ENCODE measurements at regions of chr10 and their contacts with region 1.

Region 1: GRCh38 chr10:73252445-73253224 is at the start of gene MRPS16:
- DNase-seq: peak; percentile 97
- H3K4me3 ChIP-seq: peak within 1 kb of the TSS; percentile 67 to 94 (median 82)
- H3K27ac ChIP-seq: peak within 1 kb of the TSS; percentile 85 to 94 (median 90)
- H3K4me1 ChIP-seq: peaks cover 24 to 45% (median 37%) of the 10 kb centered on the region in 4 donors
- H3K27me3 ChIP-seq: no peaks in the 10 kb centered on the region
- CTCF ChIP-seq: peak in 1 of 3 experiments; percentile 25
- EP300 ChIP-seq: no peak
- POLR2A ChIP-seq: peak; percentile 26
- total RNA-seq, gene MRPS16: 34.5 to 46.1 (median 38.0) TPM

Region 2: GRCh38 chr10:73413528-73414229 is 161.0 kb after region 1 on chr10 and contains the start of gene ANXA7:
- intact Hi-C with region 1: loop called (anchors 5 kb)
- DNase-seq: peak; percentile 96
- H3K4me3 ChIP-seq: peak within 1 kb of the TSS; percentile 79 to 90 (median 84)
- H3K27ac ChIP-seq: peak within 1 kb of the TSS; percentile 91 to 97 (median 94)
- H3K4me1 ChIP-seq: peaks cover 21 to 27% (median 25%) of the 10 kb centered on the region in 4 donors
- H3K27me3 ChIP-seq: no peaks in the 10 kb centered on the region
- CTCF ChIP-seq: peak in 2 of 3 experiments; percentile 34 to 45
- EP300 ChIP-seq: peak; percentile 42
- POLR2A ChIP-seq: peak; percentile 83
- total RNA-seq, gene ANXA7: 105 to 135 (median 128) TPM

Measured in esophagus muscularis mucosa (tissue), 4 donors.